H1 (cell line): ENCODE measurements at regions of chr16 and their contacts with region 1.

Region 1: DNA sequence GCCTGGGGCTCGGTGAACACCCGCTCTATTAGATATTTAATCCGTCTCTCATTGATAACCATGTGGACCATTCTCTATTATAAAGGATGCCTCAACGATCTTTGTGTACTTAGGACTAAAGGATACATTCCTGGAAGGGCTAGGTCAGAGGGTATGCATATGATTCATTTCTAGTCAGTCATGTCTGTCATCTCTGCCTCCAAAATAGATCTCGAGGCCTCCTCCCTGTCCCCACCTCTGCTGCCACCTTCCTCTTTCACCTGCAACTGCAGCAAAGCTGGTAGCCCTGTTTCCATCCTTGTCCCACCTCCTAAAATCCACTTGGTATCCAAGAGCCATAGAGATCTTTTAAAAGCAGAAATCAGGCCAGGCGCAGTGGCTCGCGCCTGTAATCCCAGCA is 121.5 kb downstream of the KATNIP start:
- DNase-seq: no peak
- H3K4me3 ChIP-seq: no peak overlapping the region
- H3K27ac ChIP-seq: no peak overlapping the region
- H3K4me1 ChIP-seq: no peaks in the 10 kb centered on the region; a peak in 2 of 7 replicates
- H3K27me3 ChIP-seq: no peaks in the 10 kb centered on the region
- CTCF ChIP-seq: peak; percentile 45 to 65 (median 60)
- EP300 ChIP-seq: no peak
- POLR2A ChIP-seq: no peak
- RAD21 ChIP-seq: peak; percentile 28 to 40; a peak in 2 of 4 replicates

Region 2: GRCh38 chr16:27529962-27530361 is 141.4 kb before region 1 on chr16:
- CTCF ChIA-PET with region 1: no interaction called
- POLR2A ChIA-PET with region 1: no interaction called
- DNase-seq: no peak
- H3K4me3 ChIP-seq: no peak overlapping the region
- H3K27ac ChIP-seq: no peak overlapping the region
- H3K4me1 ChIP-seq: no peaks in the 10 kb centered on the region
- H3K27me3 ChIP-seq: no peaks in the 10 kb centered on the region
- CTCF ChIP-seq: no peak
- EP300 ChIP-seq: no peak
- POLR2A ChIP-seq: no peak
- RAD21 ChIP-seq: no peak

Region 3: GRCh38 chr16:27654212-27654611 is 17.2 kb before region 1 on chr16:
- CTCF ChIA-PET with region 1: interaction called, 10 read pairs
- POLR2A ChIA-PET with region 1: interaction called, 3 read pairs
- DNase-seq: no peak
- H3K4me3 ChIP-seq: no peak overlapping the region
- H3K27ac ChIP-seq: no peak overlapping the region
- H3K4me1 ChIP-seq: peaks cover 2 to 8% (median 3%) of the 10 kb centered on the region in 4 experiments; a peak in 5 of 7 replicates
- H3K27me3 ChIP-seq: no peaks in the 10 kb centered on the region
- CTCF ChIP-seq: no peak
- EP300 ChIP-seq: no peak
- POLR2A ChIP-seq: no peak
- RAD21 ChIP-seq: no peak